ENCODE measurements at regions of chr4 and their contacts with region 1.

Region 1: GRCh38 chr4:148874331-148874730 is 432.1 kb upstream of the NR3C2 start:
- DNase-seq: no peak
- H3K4me3 ChIP-seq: no peak overlapping the region
- H3K27ac ChIP-seq: no peak overlapping the region
- H3K27me3 ChIP-seq: no peaks in the 10 kb centered on the region
- CTCF ChIP-seq: no peak

Region 2: GRCh38 chr4:149713031-149713430 is 838.7 kb after region 1 on chr4:
- CTCF ChIA-PET with region 1: interaction called, 10 read pairs
- POLR2A ChIA-PET with region 1: no interaction called
- DNase-seq: no peak
- H3K4me3 ChIP-seq: no peak overlapping the region
- H3K27ac ChIP-seq: no peak overlapping the region
- H3K27me3 ChIP-seq: no peaks in the 10 kb centered on the region
- CTCF ChIP-seq: no peak

Measured in AG04450 (cell line).